ENCODE measurements at regions of chr6 and their contacts with region 1.

Region 1: GRCh38 chr6:105964979-105965760 is 121.0 kb upstream of the PRDM1 start:
- DNase-seq: no peak
- ATAC-seq: no peak
- H3K4me3 ChIP-seq: no peak overlapping the region
- H3K27ac ChIP-seq: no peak overlapping the region
- H3K4me1 ChIP-seq: 0 out of 2 replicates have a peak, but pooled peaks cover 2% of the 10 kb centered on the region
- H3K27me3 ChIP-seq: no peaks in the 10 kb centered on the region
- CTCF ChIP-seq: no peak
- POLR2A ChIP-seq: no peak
- RAD21 ChIP-seq: no peak

Region 2: GRCh38 chr6:105900125-105900937 is 64.8 kb before region 1 on chr6:
- CTCF ChIA-PET with region 1: no interaction called
- POLR2A ChIA-PET with region 1: no interaction called
- dilution Hi-C with region 1: no loop called
- in situ Hi-C with region 1: no loop called
- intact Hi-C with region 1: no loop called
- DNase-seq: peak; percentile 91
- ATAC-seq: peak; percentile 75
- H3K4me3 ChIP-seq: no peak overlapping the region
- H3K27ac ChIP-seq: peak overlapping the region; percentile 87
- H3K4me1 ChIP-seq: peaks cover 18% of the 10 kb centered on the region
- H3K27me3 ChIP-seq: no peaks in the 10 kb centered on the region
- CTCF ChIP-seq: no peak
- POLR2A ChIP-seq: no peak
- RAD21 ChIP-seq: no peak

Region 3: DNA sequence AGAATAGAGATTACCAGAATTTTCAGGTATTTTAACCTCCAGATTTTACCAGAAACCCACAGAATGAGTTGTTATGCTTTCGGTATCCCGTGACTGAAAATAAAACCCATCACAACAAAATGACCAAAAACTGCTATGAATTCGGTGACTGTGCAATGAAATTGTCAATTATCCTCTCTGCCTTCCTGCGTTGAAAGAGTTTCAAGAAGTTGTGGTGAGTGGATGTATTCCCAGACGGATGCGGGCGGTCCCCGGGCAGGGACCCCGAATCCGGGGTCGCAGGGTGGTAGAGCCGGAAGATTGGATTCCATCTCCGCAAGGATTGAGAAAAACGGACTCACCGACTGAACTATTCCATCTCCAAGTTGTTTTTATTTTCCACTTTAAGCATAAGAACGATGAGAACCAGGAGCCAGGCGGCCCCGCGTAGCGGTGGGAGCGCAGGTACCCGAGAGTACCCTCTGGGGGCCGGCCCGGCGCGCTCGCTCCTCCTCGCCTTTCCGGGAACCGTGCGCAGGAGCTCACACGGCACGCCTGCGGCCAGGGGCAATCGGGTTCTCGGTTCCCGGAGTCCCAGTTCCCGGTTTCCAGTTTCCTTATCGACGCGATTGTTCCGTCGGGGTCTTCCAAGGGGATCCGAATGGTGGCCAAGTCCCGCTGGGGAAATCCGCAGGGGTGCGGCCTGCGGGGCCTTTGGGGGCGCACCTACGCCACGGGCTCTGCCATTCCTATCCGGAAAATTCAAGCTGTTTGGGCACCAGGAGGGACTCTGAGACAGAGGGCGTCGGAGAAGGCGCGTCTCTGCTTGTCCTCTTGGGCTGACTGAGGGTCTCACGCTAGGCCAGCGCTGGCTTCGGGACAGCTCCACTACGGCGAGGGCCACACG is 16.1 kb after region 1 on chr6:
- CTCF ChIA-PET with region 1: no interaction called
- POLR2A ChIA-PET with region 1: interaction called, 11 read pairs
- dilution Hi-C with region 1: no loop called
- in situ Hi-C with region 1: no loop called
- intact Hi-C with region 1: no loop called
- DNase-seq: no peak
- ATAC-seq: no peak
- H3K4me3 ChIP-seq: no peak overlapping the region
- H3K27ac ChIP-seq: no peak overlapping the region
- H3K4me1 ChIP-seq: peaks cover 2% of the 10 kb centered on the region; the same call in 1 of the 2 replicates
- H3K27me3 ChIP-seq: no peaks in the 10 kb centered on the region
- CTCF ChIP-seq: no peak
- POLR2A ChIP-seq: no peak
- RAD21 ChIP-seq: no peak

Measured in IMR-90 (cell line).